Posterior vena cava (tissue), 2 donors: ENCODE measurements at regions of chr2 and their contacts with region 1.

Region 1: DNA sequence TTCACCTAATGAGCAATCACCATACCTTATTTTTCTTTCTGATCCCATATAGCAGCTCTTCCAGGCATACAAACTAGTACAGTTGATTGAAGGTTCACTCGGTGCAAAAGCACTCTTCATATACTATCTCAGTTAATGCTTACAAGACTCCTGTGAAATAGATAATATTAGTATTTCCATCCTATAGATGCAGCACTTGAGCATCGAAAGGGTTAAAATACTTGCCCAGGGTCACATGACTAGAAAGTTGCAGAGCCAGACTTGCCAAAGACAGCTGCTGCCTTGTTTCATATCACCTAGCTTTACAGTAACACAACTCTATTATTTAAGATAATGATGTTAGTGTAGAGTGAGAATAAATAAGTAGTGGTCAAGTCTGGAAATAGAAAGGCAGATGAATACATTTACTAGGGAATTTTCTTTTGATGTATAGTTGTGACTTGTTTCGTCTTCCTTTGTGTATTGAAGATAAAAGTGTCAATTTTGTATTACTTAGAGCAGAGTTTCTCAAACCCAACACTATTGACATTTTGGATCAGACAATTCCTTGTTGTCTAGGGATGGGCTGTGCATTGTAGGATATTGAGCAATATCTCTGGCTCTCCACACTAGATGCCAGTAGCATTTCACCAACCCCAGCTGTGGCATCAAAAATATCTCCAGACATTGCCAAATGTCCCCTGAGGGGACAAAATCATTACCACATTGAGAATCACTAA is 466.1 kb upstream of the TNP1 start:
- DNase-seq: no peak

Region 2: GRCh38 chr2:217186668-217187159 is 139.3 kb before region 1 on chr2:
- intact Hi-C with region 1: no loop called
- DNase-seq: no peak

Region 3: DNA sequence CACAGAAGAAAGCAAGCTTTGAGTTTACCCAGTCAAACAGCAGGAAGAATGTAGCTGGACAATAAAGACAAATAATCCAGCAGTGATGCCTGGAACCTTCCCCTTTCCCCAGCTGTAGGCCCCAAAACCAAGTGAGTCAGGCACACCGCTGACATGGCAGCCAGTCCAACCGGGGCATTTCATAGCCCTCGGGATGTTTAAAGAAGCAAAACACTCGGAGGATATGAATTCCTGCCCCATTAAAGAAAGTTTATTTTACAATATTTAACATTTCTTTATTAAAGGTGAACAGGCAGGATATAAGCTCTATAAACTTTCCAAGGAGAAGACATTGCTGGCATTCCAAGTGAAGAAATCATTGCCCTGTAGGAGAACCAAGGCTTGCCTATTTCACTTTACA is 41.5 kb after region 1 on chr2:
- intact Hi-C with region 1: loop called in 1 of 2 experiments (anchors 2 kb)
- DNase-seq: no peak